MCF 10A (cell line): ENCODE measurements at regions of chr5 and their contacts with region 1.

Region 1: DNA sequence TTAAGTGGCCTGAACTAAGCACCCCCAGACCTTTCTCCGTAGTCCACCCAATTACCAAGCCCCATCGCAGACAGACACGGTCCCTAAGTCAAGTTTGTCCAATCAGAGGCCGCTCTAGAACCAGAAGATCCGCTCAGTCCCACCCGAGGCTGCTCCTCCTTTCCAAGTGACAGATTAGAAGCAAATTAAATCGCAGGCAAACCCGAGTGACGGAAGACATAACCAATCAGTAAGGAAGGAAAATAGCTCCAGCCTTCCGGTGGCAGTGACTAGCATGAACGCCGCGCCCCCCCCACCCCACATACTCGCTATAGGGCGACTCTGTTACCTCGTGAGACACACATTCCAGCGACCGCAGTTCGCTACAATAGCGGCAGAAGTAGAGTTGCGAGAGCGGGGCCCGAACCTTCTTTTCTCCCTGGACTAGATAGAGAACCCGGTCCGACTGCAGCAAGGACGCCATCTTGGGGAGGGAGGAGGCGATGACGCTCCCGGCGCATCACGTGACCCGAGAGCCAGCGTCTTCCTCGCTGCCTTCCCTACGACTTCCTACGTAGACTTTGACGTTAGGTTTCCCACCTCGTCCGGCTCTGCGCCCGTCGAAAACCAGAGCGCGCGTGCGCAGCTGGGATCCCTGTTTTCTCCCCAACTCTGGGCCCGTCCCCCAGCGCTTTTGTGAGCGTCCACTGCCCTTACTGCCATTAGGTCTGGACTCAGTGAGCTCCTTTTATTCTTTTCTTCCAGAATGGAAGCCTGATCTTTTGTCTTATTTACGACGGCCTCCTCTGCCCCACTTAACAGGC is at the start of gene DCTN4:
- DNase-seq: peak; percentile 100
- H3K4me3 Mint-ChIP-seq: no peak within 1 kb of the TSS
- H3K27ac Mint-ChIP-seq: no peak within 1 kb of the TSS
- H3K4me1 Mint-ChIP-seq: peaks cover 34% of the 10 kb centered on the region
- H3K27me3 Mint-ChIP-seq: no peaks in the 10 kb centered on the region
- CTCF ChIP-seq: no peak
- total RNA-seq, gene DCTN4: 122 and 143 TPM in 2 replicates

Region 2: DNA sequence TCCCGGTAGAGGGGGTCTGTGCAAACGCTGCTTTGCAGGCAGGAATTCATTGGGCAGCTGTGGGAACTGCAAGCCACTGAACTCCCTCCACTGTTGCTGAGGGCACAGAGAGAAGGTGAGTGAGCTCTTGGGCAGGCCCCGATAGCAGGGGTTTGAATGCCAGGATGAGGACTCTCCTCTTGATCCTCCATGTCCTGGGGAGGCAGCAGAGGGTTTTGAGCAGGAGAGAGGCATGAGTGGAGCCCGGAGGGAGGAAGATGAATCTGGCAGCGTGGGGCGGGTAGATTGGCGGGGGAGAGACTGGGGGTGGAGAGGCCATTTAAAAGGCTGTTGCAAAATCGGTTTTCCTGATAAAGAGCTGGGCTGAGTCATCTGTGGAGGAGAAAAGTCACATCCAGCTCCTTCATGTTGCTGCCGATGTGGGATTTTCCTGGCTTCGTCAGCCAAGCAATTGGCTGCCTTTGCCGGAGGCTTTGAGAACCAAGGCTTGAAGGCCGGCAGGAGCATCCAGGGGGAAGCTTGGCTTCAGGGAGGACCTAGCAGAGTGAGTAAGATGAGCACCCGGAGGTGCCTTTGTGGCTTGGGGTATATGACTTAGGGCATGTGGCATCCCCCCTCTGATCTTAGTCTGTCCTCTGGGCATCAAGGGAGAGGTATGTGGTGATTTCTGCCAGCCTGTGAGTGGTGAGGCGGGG is 118.3 kb before region 1 on chr5 and contains the start of gene SYNPO:
- CTCF ChIA-PET with region 1: no interaction called
- POLR2A ChIA-PET with region 1: interaction called, 11 read pairs
- intact Hi-C with region 1: no loop called
- DNase-seq: peak; percentile 99
- H3K4me3 Mint-ChIP-seq: peak within 1 kb of the TSS; percentile 68
- H3K27ac Mint-ChIP-seq: peak within 1 kb of the TSS; percentile 86
- H3K4me1 Mint-ChIP-seq: peaks cover 94% of the 10 kb centered on the region
- H3K27me3 Mint-ChIP-seq: no peaks in the 10 kb centered on the region
- CTCF ChIP-seq: no peak
- total RNA-seq, gene SYNPO: 6.3 and 7.1 TPM in 2 replicates

Region 3: GRCh38 chr5:150740992-150741391 is 17.7 kb before region 1 on chr5:
- CTCF ChIA-PET with region 1: interaction called, 9 read pairs
- POLR2A ChIA-PET with region 1: interaction called, 21 read pairs
- intact Hi-C with region 1: no loop called
- DNase-seq: no peak
- H3K4me3 Mint-ChIP-seq: no peak overlapping the region
- H3K27ac Mint-ChIP-seq: no peak overlapping the region
- H3K4me1 Mint-ChIP-seq: peaks cover 40% of the 10 kb centered on the region
- H3K27me3 Mint-ChIP-seq: no peaks in the 10 kb centered on the region
- CTCF ChIP-seq: no peak

Region 4: GRCh38 chr5:150789943-150790611 is 31.3 kb after region 1 on chr5:
- CTCF ChIA-PET with region 1: interaction called, 348 read pairs
- POLR2A ChIA-PET with region 1: interaction called, 55 read pairs
- intact Hi-C with region 1: no loop called
- DNase-seq: peak; percentile 100
- H3K4me3 Mint-ChIP-seq: peak overlapping the region; percentile 65
- H3K27ac Mint-ChIP-seq: peak overlapping the region; percentile 95
- H3K4me1 Mint-ChIP-seq: peaks cover 48% of the 10 kb centered on the region
- H3K27me3 Mint-ChIP-seq: no peaks in the 10 kb centered on the region
- CTCF ChIP-seq: no peak